ENCODE measurements at regions of chr17 and their contacts with region 1.

Region 1: GRCh38 chr17:48024937-48025906 is 12.4 kb downstream of the COPZ2 start:
- DNase-seq: peak; percentile 97
- H3K4me3 ChIP-seq: peak overlapping the region; percentile 5 to 55 (median 39)
- H3K27ac ChIP-seq: no peak overlapping the region
- H3K4me1 ChIP-seq: peaks cover 26% of the 10 kb centered on the region
- H3K27me3 ChIP-seq: no peaks in the 10 kb centered on the region
- CTCF ChIP-seq: peak; percentile 73 to 90
- POLR2A ChIP-seq: no peak

Region 2: GRCh38 chr17:47850692-47851573 is 174.3 kb before region 1 on chr17 and contains the start of gene SP6:
- CTCF ChIA-PET with region 1: no interaction called
- POLR2A ChIA-PET with region 1: no interaction called
- dilution Hi-C with region 1: no loop called
- intact Hi-C with region 1: no loop called
- DNase-seq: peak; percentile 58
- H3K4me3 ChIP-seq: peak within 1 kb of the TSS in 1 of 3 experiments; percentile 6
- H3K27ac ChIP-seq: no peak within 1 kb of the TSS
- H3K4me1 ChIP-seq: peaks cover 16% of the 10 kb centered on the region
- H3K27me3 ChIP-seq: peaks cover 3 to 11% of the 10 kb centered on the region in 2 experiments
- CTCF ChIP-seq: peak in 1 of 2 donors; percentile 31
- POLR2A ChIP-seq: no peak
- total RNA-seq, gene SP6: 0.90 and 1.3 TPM in 2 replicates

Region 3: DNA sequence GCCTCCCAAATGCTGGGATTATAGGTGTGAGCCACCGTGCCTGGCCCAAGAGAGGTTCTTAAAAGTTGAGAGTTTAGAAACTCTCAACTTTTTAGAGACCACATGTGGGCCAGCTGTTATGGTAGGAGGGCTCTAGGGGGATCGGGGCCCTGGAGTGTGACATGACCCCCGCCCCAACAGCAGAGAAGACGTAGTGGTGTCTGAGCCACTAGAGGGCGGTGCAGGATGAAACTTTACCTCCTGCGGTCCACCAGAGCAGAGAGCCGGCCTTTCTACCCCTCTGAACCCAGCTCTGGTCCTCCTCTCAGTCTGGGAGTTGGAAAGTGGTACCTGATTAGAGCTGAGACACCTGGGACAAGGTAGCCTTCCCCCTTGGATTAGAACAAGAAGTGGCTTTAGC is 46.9 kb before region 1 on chr17:
- CTCF ChIA-PET with region 1: interaction called, 469 read pairs
- POLR2A ChIA-PET with region 1: no interaction called
- dilution Hi-C with region 1: no loop called
- intact Hi-C with region 1: loop called (anchors 1 kb)
- DNase-seq: peak; percentile 48
- H3K4me3 ChIP-seq: no peak overlapping the region
- H3K27ac ChIP-seq: no peak overlapping the region
- H3K4me1 ChIP-seq: no peaks in the 10 kb centered on the region
- H3K27me3 ChIP-seq: no peaks in the 10 kb centered on the region
- CTCF ChIP-seq: peak; percentile 75 to 83
- POLR2A ChIP-seq: no peak

Region 4: GRCh38 chr17:48002266-48002915 is 22.8 kb before region 1 on chr17:
- CTCF ChIA-PET with region 1: no interaction called
- POLR2A ChIA-PET with region 1: no interaction called
- dilution Hi-C with region 1: no loop called
- intact Hi-C with region 1: no loop called
- DNase-seq: peak; percentile 85
- H3K4me3 ChIP-seq: no peak overlapping the region
- H3K27ac ChIP-seq: peak overlapping the region; percentile 84
- H3K4me1 ChIP-seq: peaks cover 30% of the 10 kb centered on the region
- H3K27me3 ChIP-seq: no peaks in the 10 kb centered on the region
- CTCF ChIP-seq: no peak
- POLR2A ChIP-seq: peak; percentile 73

Region 5: GRCh38 chr17:48055442-48056237 is 30.4 kb after region 1 on chr17:
- CTCF ChIA-PET with region 1: interaction called, 64 read pairs
- POLR2A ChIA-PET with region 1: no interaction called
- dilution Hi-C with region 1: no loop called
- intact Hi-C with region 1: no loop called
- DNase-seq: no peak
- H3K4me3 ChIP-seq: no peak overlapping the region
- H3K27ac ChIP-seq: no peak overlapping the region
- H3K4me1 ChIP-seq: peaks cover 41% of the 10 kb centered on the region
- H3K27me3 ChIP-seq: no peaks in the 10 kb centered on the region
- CTCF ChIP-seq: no peak
- POLR2A ChIP-seq: no peak

Region 6: GRCh38 chr17:48074315-48075081 is 49.3 kb after region 1 on chr17:
- CTCF ChIA-PET with region 1: interaction called, 210 read pairs
- POLR2A ChIA-PET with region 1: no interaction called
- dilution Hi-C with region 1: no loop called
- intact Hi-C with region 1: loop called (anchors 1 kb)
- DNase-seq: peak; percentile 88
- H3K4me3 ChIP-seq: no peak overlapping the region
- H3K27ac ChIP-seq: no peak overlapping the region
- H3K4me1 ChIP-seq: no peaks in the 10 kb centered on the region
- H3K27me3 ChIP-seq: no peaks in the 10 kb centered on the region
- CTCF ChIP-seq: peak; percentile 63 to 69
- POLR2A ChIP-seq: no peak

Region 7: GRCh38 chr17:48131216-48131824 is 106.1 kb after region 1 on chr17:
- CTCF ChIA-PET with region 1: interaction called, 112 read pairs
- POLR2A ChIA-PET with region 1: no interaction called
- dilution Hi-C with region 1: no loop called
- intact Hi-C with region 1: loop called (anchors 1 kb)
- DNase-seq: peak; percentile 63
- H3K4me3 ChIP-seq: no peak overlapping the region
- H3K27ac ChIP-seq: no peak overlapping the region
- H3K4me1 ChIP-seq: peaks cover 15% of the 10 kb centered on the region
- H3K27me3 ChIP-seq: peaks cover 0 to 2% of the 10 kb centered on the region in 2 experiments
- CTCF ChIP-seq: peak; percentile 75 to 81
- POLR2A ChIP-seq: no peak

Region 8: DNA sequence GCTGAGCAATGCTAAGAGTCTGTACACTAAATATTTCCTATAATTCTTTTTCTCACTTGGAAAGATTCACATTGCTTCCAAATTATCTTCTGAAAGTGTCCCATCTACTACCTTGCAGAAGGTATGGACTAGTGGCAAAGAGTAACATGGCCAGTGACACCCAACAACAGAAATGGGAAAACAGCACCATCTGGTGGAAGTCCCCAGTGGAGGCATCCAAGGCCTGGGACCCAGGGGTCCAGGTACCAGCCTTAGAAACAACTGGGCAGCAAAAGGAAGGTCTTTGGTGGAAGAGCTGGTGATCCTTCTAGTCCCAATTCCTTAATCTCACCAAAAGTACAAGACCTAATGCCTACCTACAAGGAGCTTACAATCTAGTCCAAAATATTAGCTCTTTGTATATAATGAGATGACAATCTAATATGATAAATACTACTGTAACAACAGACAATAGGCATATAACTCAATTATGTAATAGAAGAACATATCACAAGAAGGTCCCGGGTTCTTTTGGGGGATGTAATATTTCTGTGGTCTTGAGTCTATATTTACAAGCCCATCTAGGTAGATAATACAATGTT is 349.5 kb after region 1 on chr17:
- CTCF ChIA-PET with region 1: interaction called, 3 read pairs
- POLR2A ChIA-PET with region 1: no interaction called
- dilution Hi-C with region 1: no loop called
- intact Hi-C with region 1: loop called (anchors 1 kb)
- DNase-seq: peak; percentile 26
- H3K4me3 ChIP-seq: no peak overlapping the region
- H3K27ac ChIP-seq: no peak overlapping the region
- H3K4me1 ChIP-seq: no peaks in the 10 kb centered on the region
- H3K27me3 ChIP-seq: peaks cover 45 to 62% of the 10 kb centered on the region in 2 experiments
- CTCF ChIP-seq: peak; percentile 64 to 65
- POLR2A ChIP-seq: no peak

Measured in endothelial cell of umbilical vein (primary cell).